ENCODE measurements at regions of chr11 and their contacts with region 1.

Region 1: DNA sequence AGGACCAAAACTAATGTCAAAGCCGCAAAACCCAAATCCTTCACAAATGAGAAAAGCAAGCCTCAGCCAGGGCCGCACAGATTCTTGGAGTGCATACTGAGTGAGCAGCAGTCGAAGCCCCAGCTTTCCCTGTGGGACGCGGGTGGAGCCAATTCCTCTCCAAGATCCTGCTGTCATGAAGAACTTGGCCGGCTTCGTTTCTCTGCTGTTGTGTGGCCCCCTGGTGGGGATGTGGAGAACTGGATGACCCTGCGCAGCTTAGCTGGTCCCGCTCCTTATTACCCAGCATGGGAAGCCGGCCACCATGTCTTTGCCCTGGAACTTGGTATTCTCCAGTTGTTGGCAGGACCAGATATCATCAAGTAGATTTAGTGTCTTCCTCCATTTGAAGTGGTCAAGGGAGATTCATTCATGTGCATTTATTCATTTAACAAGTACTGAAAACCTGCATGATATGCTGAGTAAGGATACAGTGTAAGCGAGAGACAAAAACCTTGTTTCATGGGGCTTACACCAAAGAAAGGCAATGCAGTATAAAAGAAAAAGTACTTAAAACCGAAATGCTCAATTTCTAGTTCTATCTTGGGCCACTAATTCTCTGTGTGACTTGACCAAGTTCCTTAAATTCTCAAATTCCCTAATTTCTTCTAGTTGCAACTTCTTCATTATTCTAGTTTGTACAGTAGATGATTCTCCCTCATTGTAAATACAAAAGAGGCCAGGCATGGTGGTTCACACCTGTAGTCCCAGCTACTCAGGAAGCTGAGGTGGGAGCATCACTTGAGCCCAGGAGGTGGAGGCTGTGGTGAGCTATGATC is 56.7 kb upstream of the CRTAM start:
- DNase-seq: peak; percentile 91 to 96 (median 93)
- H3K4me3 ChIP-seq: no peak overlapping the region
- H3K27ac ChIP-seq: no peak overlapping the region
- H3K4me1 ChIP-seq: peaks cover 0 to 5% (median 0%) of the 10 kb centered on the region in 3 donors
- H3K27me3 ChIP-seq: no peaks in the 10 kb centered on the region
- CTCF ChIP-seq: peak; percentile 94

Region 2: DNA sequence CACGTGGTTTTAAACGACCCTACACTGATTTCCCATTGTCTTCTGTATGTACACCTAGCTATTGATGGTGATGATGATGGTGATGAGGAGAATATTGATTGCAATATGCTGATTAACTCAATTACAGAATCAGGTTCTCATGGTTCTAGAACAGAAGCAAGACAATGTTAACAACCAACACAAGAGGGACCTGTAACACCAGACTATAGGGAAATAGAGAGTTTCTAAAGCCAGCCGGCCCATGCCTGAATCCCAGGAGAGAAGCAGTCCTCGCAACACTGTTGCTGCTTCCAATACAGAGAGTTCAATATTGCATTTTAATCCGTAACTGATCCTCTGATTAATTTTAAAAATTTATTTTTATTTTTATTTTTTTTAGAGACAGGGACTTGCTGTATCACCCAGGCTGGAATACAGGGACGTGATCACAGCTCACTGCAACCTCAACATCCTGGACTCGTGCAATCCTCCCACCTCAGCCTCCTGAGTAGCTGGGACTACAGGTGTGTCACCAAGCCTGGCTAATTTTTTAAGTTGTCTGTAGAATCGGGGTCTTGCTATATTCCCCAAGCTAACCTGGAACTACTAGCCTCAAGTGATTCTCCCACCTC is 148.3 kb before region 1 on chr11:
- intact Hi-C with region 1: loop called (anchors 10 kb)
- DNase-seq: peak in 3 of 5 donors; percentile 17 to 71 (median 49)
- H3K4me3 ChIP-seq: no peak overlapping the region
- H3K27ac ChIP-seq: no peak overlapping the region
- H3K4me1 ChIP-seq: no peaks in the 10 kb centered on the region
- H3K27me3 ChIP-seq: no peaks in the 10 kb centered on the region
- CTCF ChIP-seq: peak; percentile 39

Measured in kidney (tissue), 22 donors.